ENCODE measurements at regions of chr12 and their contacts with region 1.

Region 1: GRCh38 chr12:21697904-21698630 is 40.4 kb upstream of the LDHB start:
- DNase-seq: peak; percentile 46 to 66 (median 63)
- H3K4me3 ChIP-seq: no peak overlapping the region
- H3K27ac ChIP-seq: no peak overlapping the region
- H3K4me1 ChIP-seq: no peaks in the 10 kb centered on the region
- H3K27me3 ChIP-seq: peaks cover 0 to 4% (median 0%) of the 10 kb centered on the region in 5 experiments

Region 2: DNA sequence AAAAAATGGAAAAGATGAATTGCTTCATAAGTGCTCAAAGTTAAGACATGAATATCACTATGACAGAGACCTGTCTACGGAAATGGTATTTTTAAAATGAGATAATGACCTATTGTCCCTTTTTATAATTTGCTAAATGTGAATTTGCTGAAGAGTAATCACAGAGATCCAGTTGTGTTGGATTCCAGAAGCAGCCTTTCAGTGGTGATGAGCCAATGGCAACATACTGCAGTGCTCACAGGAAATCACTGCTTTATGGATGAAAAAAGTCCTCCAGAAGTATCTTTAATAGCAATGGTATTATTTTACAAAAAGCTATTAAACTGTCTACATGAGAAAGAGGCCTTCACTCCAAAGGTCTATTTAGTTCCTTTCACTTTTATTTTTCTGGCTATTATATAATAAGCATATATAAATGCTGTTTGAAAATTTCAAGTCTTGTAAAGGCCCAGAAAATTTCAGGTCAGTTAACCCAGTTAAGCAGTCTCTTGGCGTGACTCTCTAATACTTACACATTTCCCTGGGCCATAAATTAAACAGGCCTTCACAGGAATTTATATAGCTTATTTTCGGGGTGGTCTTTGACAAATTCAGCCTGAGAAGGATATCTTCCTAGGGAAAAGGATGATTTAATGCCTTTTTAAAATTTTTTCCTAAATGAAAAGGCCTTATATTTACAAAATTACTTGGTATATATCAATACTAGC is 21.0 kb after region 1 on chr12:
- CTCF ChIA-PET with region 1: no interaction called
- POLR2A ChIA-PET with region 1: no interaction called
- DNase-seq: no peak
- H3K4me3 ChIP-seq: no peak overlapping the region
- H3K27ac ChIP-seq: no peak overlapping the region
- H3K4me1 ChIP-seq: peaks cover 0 to 3% (median 0%) of the 10 kb centered on the region in 4 experiments
- H3K27me3 ChIP-seq: no peaks in the 10 kb centered on the region

Region 3: GRCh38 chr12:21839776-21840175 is 141.7 kb after region 1 on chr12:
- CTCF ChIA-PET with region 1: no interaction called
- POLR2A ChIA-PET with region 1: no interaction called
- DNase-seq: no peak
- H3K4me3 ChIP-seq: no peak overlapping the region
- H3K27ac ChIP-seq: no peak overlapping the region
- H3K4me1 ChIP-seq: no peaks in the 10 kb centered on the region
- H3K27me3 ChIP-seq: no peaks in the 10 kb centered on the region

Region 4: DNA sequence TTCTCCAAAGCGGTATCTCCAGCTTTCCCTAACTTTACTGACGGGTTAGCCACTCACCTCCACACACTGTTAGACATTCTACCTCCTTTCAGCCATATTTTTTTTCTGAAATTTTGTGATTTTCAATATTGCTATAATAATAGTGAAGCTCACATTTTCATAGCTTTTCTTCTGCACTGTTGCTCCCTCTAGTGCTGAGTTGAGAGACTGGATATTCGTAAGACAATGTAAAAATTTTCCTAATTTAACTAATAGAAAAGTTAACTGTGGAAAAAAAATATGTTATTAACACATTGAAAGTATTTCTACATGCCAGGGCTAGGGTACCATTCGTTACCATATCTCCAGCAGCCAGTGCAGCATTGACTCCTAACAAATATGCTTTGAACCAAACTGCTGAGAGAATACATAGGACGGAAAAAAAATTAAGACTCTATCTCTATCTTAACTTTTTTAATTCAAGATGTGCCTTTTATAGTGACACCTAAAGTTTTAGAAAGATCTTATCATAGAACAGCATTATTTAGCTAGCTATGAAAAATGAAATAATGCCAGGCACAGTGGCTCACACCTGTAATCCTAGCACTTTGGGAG is 291.8 kb after region 1 on chr12:
- CTCF ChIA-PET with region 1: interaction called, 41 read pairs
- POLR2A ChIA-PET with region 1: no interaction called
- DNase-seq: peak; percentile 29 to 56 (median 55)
- H3K4me3 ChIP-seq: no peak overlapping the region
- H3K27ac ChIP-seq: no peak overlapping the region
- H3K4me1 ChIP-seq: no peaks in the 10 kb centered on the region
- H3K27me3 ChIP-seq: peaks cover 0 to 3% (median 0%) of the 10 kb centered on the region in 5 experiments

Region 5: GRCh38 chr12:22018860-22019259 is 320.8 kb after region 1 on chr12:
- CTCF ChIA-PET with region 1: interaction called, 13 read pairs
- POLR2A ChIA-PET with region 1: no interaction called
- DNase-seq: peak; percentile 10 to 26 (median 25)
- H3K4me3 ChIP-seq: no peak overlapping the region
- H3K27ac ChIP-seq: no peak overlapping the region
- H3K4me1 ChIP-seq: no peaks in the 10 kb centered on the region
- H3K27me3 ChIP-seq: no peaks in the 10 kb centered on the region